Natural killer cell (primary cell): ENCODE measurements at regions of chr16 and their contacts with region 1.

Region 1: DNA sequence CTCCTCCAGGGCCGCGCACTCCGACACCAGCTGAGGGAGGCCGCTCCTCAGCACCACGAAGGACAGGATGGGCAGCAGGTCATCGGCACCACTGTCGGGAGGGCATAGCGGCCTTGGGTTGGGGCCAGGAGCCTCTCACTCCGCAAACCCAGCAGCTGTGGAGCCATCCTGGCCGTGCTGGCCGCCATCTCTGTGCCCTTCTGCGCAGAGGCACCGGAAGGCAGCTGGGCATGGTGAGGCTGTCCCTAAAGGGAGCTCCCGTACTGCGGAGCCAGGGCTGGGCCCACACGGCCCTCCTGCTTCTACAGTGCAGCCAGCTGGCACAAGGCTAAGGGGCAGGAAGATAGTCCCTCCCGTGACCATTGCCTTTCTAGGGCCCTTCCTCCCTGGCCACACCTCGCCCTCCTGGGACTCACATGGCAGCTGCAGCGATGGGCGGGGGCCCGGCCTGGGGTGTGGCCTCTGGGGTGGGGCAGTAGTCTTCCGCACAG is 7.0 kb upstream of the SPATA2L start:
- DNase-seq: no peak
- ATAC-seq: no peak
- H3K4me3 ChIP-seq: no peak overlapping the region
- H3K4me3 Mint-ChIP-seq: no peak overlapping the region
- H3K27ac ChIP-seq: no peak overlapping the region
- H3K27ac Mint-ChIP-seq: no peak overlapping the region
- H3K4me1 ChIP-seq: peaks cover 26% of the 10 kb centered on the region
- H3K4me1 Mint-ChIP-seq: peaks cover 6% of the 10 kb centered on the region in 2 donors
- H3K27me3 ChIP-seq: no peaks in the 10 kb centered on the region
- H3K27me3 Mint-ChIP-seq: no peaks in the 10 kb centered on the region
- CTCF ChIP-seq: no peak

Region 2: DNA sequence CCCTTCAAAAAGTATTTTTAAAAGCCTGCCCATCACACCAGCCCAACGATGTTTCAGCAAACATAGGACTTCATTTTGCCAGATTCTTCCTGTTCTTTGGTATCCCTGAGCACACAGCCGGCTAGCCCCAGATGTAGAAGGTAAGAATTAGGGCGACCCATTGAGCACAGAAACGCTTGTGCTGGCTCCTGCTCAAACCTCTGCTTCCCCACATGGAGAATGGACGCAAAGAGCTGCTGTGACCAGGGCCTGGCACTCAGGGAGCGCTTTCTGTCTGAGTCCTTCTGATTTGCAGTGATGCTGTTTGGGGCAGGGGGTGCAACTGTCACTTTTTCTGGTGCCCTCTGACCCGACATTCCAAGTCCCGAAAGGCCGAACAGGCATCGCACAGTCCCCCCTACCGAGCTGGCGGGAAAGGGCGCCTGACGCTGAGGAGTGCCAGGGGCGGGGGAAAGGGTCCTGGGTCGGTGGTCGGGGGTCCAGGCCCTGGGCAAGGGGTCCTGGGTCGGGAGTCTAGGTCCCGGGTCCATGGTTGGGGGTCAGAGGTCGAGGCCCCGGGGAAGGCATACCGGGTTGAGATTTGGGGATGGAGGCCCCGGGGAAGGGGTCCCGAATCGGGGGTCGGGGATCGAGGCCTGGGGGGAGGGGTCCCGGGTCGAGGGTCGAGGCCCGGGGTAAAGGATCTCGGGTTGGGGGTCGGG is 51.9 kb before region 1 on chr16:
- intact Hi-C with region 1: no loop called
- DNase-seq: no peak
- ATAC-seq: no peak
- H3K4me3 ChIP-seq: peak overlapping the region; percentile 78
- H3K4me3 Mint-ChIP-seq: peak overlapping the region; percentile 91
- H3K27ac ChIP-seq: peak overlapping the region; percentile 68
- H3K27ac Mint-ChIP-seq: peak overlapping the region; percentile 76 to 83
- H3K4me1 ChIP-seq: peaks cover 42% of the 10 kb centered on the region
- H3K4me1 Mint-ChIP-seq: peaks cover 27 to 37% of the 10 kb centered on the region in 2 donors
- H3K27me3 ChIP-seq: no peaks in the 10 kb centered on the region
- H3K27me3 Mint-ChIP-seq: no peaks in the 10 kb centered on the region
- CTCF ChIP-seq: no peak

Region 3: DNA sequence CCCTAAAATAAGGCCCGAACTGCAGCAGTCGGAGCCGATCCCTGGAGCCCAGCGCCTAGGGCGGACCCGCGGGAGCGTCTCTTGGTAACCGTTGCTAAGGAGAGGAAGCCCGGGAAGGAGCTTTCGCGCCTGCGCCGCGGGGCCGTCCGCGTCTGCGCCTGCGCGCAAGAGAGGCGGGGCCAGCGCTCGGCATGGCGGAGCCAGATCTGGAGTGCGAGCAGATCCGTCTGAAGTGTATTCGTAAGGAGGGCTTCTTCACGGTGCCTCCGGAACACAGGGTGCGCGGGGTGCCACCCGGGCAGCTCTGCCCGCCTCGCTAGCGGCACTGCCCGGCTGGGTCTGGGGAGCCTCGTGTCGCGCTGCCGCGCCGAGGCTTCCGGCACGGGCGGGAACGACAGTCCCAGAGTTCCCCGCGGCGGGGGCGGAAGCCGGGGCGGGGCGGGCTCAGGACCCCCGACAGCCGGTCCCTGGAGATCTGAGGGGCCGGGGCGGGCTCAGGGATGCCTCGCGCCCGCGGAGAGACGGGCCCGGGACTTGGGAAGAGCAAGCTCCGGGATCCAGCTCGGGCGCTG is 21.9 kb before region 1 on chr16 and contains the start of gene CDK10:
- intact Hi-C with region 1: no loop called
- DNase-seq: peak; percentile 92 to 94
- ATAC-seq: peak; percentile 86 to 87 (median 86)
- H3K4me3 ChIP-seq: peak within 1 kb of the TSS; percentile 52
- H3K4me3 Mint-ChIP-seq: peak within 1 kb of the TSS; percentile 96
- H3K27ac ChIP-seq: peak within 1 kb of the TSS; percentile 60
- H3K27ac Mint-ChIP-seq: peak within 1 kb of the TSS; percentile 89 to 92
- H3K4me1 ChIP-seq: peaks cover 19% of the 10 kb centered on the region
- H3K4me1 Mint-ChIP-seq: peaks cover 7 to 20% of the 10 kb centered on the region in 2 donors
- H3K27me3 ChIP-seq: no peaks in the 10 kb centered on the region
- H3K27me3 Mint-ChIP-seq: no peaks in the 10 kb centered on the region
- CTCF ChIP-seq: no peak
- total RNA-seq, gene CDK10: 102 to 123 (median 114) TPM

Region 4: DNA sequence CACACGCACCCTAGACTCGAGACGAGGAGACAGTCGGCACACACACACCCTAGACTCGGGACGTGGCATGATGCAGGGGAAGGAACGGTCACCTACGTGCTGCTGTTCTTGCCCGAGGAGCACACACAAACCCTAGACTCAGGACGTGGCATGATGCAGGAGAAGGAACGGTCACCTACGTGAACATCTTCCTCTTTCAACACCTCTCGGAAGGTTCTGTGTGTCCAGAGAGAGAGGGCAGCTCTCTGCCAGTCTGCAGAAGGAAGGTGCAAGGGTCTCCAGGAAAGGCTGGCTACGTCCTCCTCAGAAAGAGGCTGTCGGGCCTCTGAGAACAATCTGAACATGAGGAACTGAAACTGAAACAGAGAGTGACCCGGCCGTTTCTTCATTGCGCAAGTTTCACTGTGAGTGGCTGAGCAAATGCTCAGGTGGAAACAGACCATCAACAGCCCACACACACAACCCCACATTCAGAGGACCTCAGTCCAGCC is 56.3 kb after region 1 on chr16:
- intact Hi-C with region 1: loop called (anchors 5 kb)
- DNase-seq: peak; percentile 54 to 67
- ATAC-seq: peak; percentile 85 to 88 (median 87)
- H3K4me3 ChIP-seq: peak overlapping the region; percentile 39
- H3K4me3 Mint-ChIP-seq: peak overlapping the region; percentile 93
- H3K27ac ChIP-seq: peak overlapping the region; percentile 83
- H3K27ac Mint-ChIP-seq: peak overlapping the region; percentile 95 to 98
- H3K4me1 ChIP-seq: peaks cover 52% of the 10 kb centered on the region
- H3K4me1 Mint-ChIP-seq: peaks cover 33 to 43% of the 10 kb centered on the region in 2 donors
- H3K27me3 ChIP-seq: no peaks in the 10 kb centered on the region
- H3K27me3 Mint-ChIP-seq: no peaks in the 10 kb centered on the region
- CTCF ChIP-seq: no peak

Region 5: DNA sequence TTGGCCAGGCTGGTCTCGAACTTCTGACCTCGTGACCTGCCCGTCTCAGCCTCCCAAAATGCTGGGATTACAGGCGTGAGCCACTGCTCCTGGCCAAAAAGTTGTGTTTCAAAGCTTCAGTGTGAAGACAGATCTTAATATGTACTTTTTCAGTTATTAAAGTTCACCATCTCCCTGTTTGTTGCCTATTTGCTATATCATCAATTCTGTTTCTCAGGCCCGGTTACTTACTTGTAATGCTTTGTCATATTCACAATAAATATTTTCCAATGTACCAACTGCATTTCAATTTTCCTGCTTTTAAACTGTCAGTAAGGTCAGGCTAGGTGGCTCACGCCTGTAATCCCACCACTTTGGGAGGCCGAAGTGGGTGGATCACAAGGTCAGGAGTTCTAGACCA is 85.5 kb after region 1 on chr16:
- intact Hi-C with region 1: loop called (anchors 1 kb)
- DNase-seq: no peak
- ATAC-seq: no peak
- H3K4me3 ChIP-seq: no peak overlapping the region
- H3K4me3 Mint-ChIP-seq: no peak overlapping the region
- H3K27ac ChIP-seq: no peak overlapping the region
- H3K27ac Mint-ChIP-seq: no peak overlapping the region
- H3K4me1 ChIP-seq: peaks cover 3% of the 10 kb centered on the region
- H3K4me1 Mint-ChIP-seq: peaks cover 11 to 13% of the 10 kb centered on the region in 2 donors
- H3K27me3 ChIP-seq: no peaks in the 10 kb centered on the region
- H3K27me3 Mint-ChIP-seq: no peaks in the 10 kb centered on the region
- CTCF ChIP-seq: no peak

Region 6: DNA sequence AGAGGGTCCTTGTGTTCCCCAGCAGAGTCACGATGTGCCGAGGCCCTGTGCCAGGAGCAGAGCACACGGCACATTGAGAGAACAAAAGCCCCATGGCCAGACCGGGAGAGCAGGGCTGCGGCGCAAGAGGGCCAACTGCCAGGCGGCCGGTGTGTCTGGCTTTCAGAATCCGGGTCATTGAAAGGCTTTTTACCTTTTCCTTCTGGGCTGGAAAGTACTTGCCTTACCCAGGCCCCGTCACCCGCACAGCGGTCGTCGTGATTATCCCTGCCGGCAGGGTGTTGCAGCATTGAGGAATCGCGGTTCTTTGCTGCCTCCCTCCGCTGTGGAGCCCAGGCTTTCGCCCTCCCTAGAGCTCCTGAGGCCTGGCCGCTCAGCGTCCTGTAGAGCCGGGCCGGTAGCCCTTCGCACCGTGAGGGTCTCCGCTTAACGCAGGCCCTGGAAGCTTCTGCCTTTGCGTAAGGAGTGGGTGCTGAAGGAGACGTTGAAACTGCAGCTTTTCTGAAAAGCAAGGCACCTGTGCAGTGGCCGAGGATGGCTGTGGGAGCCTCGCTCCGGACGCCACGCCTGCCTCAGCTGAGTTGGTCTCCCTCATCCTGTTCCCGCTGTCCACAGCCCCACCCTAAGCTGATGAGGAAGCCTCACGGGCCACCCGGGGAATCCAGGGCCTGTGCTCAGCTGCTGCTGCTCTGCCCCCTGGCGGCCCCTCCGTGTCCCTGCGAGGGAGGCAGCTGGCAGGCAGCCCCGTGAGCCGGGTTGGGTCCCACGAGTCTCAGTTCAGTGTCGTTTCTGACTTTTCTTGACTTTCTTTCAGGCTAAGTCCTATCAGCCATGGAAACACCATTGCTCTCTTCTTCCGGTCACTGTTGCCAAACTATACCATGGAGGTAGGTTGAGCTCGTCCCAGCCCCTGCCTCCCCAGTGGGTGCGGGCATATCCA is 201.6 kb after region 1 on chr16:
- intact Hi-C with region 1: loop called (anchors 5 kb)
- DNase-seq: peak; percentile 58 to 81
- ATAC-seq: peak; percentile 74 to 87 (median 81)
- H3K4me3 ChIP-seq: no peak overlapping the region
- H3K4me3 Mint-ChIP-seq: no peak overlapping the region
- H3K27ac ChIP-seq: no peak overlapping the region
- H3K27ac Mint-ChIP-seq: no peak overlapping the region
- H3K4me1 ChIP-seq: peaks cover 13% of the 10 kb centered on the region
- H3K4me1 Mint-ChIP-seq: peaks cover 0 to 17% of the 10 kb centered on the region in 2 donors
- H3K27me3 ChIP-seq: no peaks in the 10 kb centered on the region
- H3K27me3 Mint-ChIP-seq: no peaks in the 10 kb centered on the region
- CTCF ChIP-seq: peak; percentile 75